CD4-positive, alpha-beta memory T cell (primary cell): ENCODE measurements at regions of chr22 and their contacts with region 1.

Region 1: GRCh38 chr22:29071261-29072045 is 1.4 kb upstream of the KREMEN1 start:
- DNase-seq: peak in 1 of 5 donors; percentile 34
- H3K4me3 ChIP-seq: peak overlapping the region in 1 of 2 donors; percentile 58
- H3K4me3 Mint-ChIP-seq: peak overlapping the region; percentile 79 to 88 (median 82)
- H3K27ac ChIP-seq: no peak overlapping the region
- H3K27ac Mint-ChIP-seq: peak overlapping the region in 2 of 7 donors; percentile 24 to 30
- H3K4me1 ChIP-seq: peaks cover 23% of the 10 kb centered on the region
- H3K4me1 Mint-ChIP-seq: peaks cover 9 to 33% (median 20%) of the 10 kb centered on the region in 4 donors
- H3K27me3 ChIP-seq: peaks cover 21% of the 10 kb centered on the region
- H3K27me3 Mint-ChIP-seq: peaks cover 15 to 37% of the 10 kb centered on the region in 2 donors

Region 2: GRCh38 chr22:28882878-28883656 is 188.4 kb before region 1 on chr22 and contains the start of gene ZNRF3:
- CTCF ChIA-PET with region 1: no interaction called
- POLR2A ChIA-PET with region 1: interaction called, 5 read pairs
- intact Hi-C with region 1: loop called (anchors 1 kb)
- DNase-seq: peak; percentile 86 to 90 (median 87)
- H3K4me3 ChIP-seq: peak within 1 kb of the TSS; percentile 61 to 83
- H3K4me3 Mint-ChIP-seq: peak within 1 kb of the TSS; percentile 88 to 92 (median 90)
- H3K27ac ChIP-seq: no peak within 1 kb of the TSS
- H3K27ac Mint-ChIP-seq: peak within 1 kb of the TSS; percentile 74 to 87 (median 81)
- H3K4me1 ChIP-seq: peaks cover 15% of the 10 kb centered on the region
- H3K4me1 Mint-ChIP-seq: peaks cover 9 to 32% (median 21%) of the 10 kb centered on the region in 4 donors
- H3K27me3 ChIP-seq: no peaks in the 10 kb centered on the region
- H3K27me3 Mint-ChIP-seq: peaks cover 5 to 7% of the 10 kb centered on the region in 2 donors
- total RNA-seq, gene ZNRF3: 0.70 to 0.89 TPM

Region 3: DNA sequence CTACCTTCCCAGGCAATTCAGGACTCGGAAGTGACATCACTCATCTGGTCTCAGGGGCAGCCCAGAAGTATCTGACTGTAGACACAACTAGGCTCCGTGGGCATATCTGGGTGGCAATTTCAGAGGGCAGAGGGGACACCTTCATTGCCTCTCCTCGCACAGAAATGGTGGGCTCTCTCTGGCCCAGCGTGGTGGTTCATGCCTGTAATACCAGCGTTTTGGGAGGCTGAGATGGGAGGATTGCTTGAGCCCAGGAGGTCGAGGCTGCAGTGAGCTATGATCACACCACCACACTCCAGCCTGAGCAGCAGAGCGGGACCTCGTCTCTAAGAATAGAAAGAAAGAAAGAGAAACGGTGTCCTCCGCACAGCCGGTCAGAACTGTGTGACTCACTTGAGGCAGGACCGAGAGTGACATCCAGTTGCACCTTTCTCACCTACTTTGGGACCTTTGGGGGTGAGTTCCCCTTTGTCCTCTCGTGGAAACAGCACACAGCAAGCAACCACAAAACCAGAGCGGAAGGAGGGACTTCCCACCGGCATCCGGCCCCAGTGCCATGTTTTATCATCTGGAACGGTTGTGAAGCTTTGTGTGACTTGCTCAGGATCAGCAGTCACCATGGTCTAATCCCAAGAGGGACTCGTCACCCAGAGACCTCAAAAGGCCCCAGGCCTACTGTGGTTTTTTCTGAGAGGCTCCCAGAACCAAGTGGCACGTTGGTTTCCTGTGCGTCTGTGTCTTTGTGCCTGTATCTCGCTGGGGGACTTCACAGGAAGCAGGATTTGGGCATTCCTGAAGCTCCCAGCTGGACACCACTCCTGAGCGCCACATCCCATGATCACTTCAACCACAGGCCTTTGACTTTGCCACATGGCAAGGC is 95.8 kb after region 1 on chr22:
- CTCF ChIA-PET with region 1: no interaction called
- POLR2A ChIA-PET with region 1: no interaction called
- intact Hi-C with region 1: no loop called
- DNase-seq: peak; percentile 26 to 57 (median 29)
- H3K4me3 ChIP-seq: peak overlapping the region; percentile 11 to 15
- H3K4me3 Mint-ChIP-seq: peak overlapping the region; percentile 57 to 77 (median 72)
- H3K27ac ChIP-seq: no peak overlapping the region
- H3K27ac Mint-ChIP-seq: peak overlapping the region in 5 of 7 donors; percentile 27 to 70 (median 37)
- H3K4me1 ChIP-seq: peaks cover 13% of the 10 kb centered on the region
- H3K4me1 Mint-ChIP-seq: peaks cover 14 to 23% (median 18%) of the 10 kb centered on the region in 4 donors
- H3K27me3 ChIP-seq: no peaks in the 10 kb centered on the region
- H3K27me3 Mint-ChIP-seq: peaks cover 3 to 6% of the 10 kb centered on the region in 2 donors